Activated naive CD4-positive, alpha-beta T cell treated with anti-CD3 and anti-CD28 coated beads for 36 hours (primary cell): ENCODE measurements at regions of chr14 and their contacts with region 1.

Region 1: DNA sequence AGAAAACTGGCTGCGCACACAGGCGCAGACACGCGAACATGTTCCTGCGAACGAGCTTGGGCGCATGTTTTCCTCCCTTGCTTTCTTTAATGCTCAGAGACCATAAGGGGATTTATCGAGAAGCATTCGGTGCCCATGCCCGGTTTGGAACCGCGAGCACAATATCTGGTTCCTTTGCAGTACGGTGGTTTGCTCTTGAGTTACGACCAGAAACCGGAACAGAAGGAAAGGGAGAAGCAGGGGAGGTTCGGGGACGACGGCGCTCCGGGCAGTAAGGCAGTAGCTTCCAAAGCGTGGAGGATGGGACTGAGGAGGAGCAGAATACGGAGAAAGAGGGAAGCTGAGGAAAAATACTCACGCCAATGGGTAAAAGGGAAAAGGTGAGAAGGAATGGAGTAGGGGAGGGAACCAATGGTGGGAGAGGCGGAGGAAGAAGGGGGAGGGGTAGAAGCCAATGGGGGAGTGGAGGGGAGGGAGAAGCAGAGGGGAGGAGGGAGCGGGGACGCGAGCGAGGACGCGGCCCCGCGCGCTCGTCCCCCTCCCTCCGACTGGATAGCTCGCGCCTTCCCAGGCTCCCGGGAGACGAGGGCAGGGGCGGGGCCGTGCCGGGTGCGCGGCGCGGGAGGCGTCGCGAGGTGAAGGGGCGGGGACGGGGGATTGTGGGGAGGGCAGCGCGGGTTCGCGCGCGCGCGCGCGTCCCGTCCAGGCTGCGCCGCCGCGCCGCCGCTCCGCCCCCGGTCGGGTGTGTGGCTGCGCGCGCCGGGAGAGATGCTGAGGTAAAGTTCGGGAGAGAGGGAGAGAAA is 625 bp upstream of the ARHGAP5 start:
- DNase-seq: peak; percentile 81
- H3K4me3 Mint-ChIP-seq: peak overlapping the region; percentile 95
- H3K27ac Mint-ChIP-seq: peak overlapping the region; percentile 89
- H3K4me1 Mint-ChIP-seq: peaks cover 31% of the 10 kb centered on the region
- H3K27me3 Mint-ChIP-seq: peaks cover 2% of the 10 kb centered on the region

Region 2: DNA sequence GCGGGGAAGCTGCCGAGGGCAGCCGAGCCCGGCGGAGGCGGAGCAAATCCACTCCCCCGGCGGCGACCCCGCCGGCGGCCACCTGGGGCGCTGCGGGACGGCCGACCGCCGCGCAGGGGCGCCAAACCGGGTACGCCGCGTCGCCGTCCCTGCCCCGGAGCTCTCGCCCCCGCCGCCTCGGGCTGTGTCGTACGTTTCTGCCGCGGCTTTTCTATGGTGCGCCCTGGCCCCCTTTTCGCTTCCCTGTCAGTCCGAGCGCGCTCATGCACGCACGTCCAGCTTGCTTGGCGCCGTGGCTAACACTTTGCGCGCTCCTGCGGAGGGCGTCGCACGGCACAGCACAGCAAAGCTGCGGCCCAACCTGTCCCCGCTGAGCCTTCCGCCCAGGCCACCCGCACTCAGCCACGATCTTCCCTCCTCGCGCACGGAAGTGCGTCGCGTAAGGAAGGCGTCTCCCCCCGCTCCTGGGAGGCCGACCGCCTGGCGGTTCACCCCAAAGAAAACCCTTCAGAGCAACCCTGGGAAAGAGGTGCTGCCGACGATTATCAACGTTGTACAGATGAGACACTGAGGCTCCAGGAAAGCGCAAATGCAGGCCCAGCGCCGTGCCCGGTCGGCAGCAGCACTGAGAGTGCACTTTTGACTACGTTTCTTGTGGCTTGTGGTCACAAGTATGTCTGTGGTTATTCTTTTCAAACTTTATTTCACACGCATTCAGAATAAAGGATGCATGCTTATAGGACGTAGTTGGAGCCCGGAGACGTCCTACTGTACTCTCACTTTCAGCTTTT is 868.5 kb before region 1 on chr14 and contains the start of gene HECTD1:
- CTCF ChIA-PET with region 1: no interaction called
- intact Hi-C with region 1: loop called (anchors 2 kb)
- DNase-seq: peak; percentile 89
- H3K4me3 Mint-ChIP-seq: peak within 1 kb of the TSS; percentile 92
- H3K27ac Mint-ChIP-seq: peak within 1 kb of the TSS; percentile 100
- H3K4me1 Mint-ChIP-seq: peaks cover 34% of the 10 kb centered on the region
- H3K27me3 Mint-ChIP-seq: no peaks in the 10 kb centered on the region
- total RNA-seq, gene HECTD1: 61.5 to 64.1 TPM

Region 3: GRCh38 chr14:31510222-31510621 is 566.3 kb before region 1 on chr14:
- CTCF ChIA-PET with region 1: no interaction called
- intact Hi-C with region 1: loop called (anchors 2 kb)
- DNase-seq: no peak
- H3K4me3 Mint-ChIP-seq: no peak overlapping the region
- H3K27ac Mint-ChIP-seq: no peak overlapping the region
- H3K4me1 Mint-ChIP-seq: no peaks in the 10 kb centered on the region
- H3K27me3 Mint-ChIP-seq: no peaks in the 10 kb centered on the region

Region 4: DNA sequence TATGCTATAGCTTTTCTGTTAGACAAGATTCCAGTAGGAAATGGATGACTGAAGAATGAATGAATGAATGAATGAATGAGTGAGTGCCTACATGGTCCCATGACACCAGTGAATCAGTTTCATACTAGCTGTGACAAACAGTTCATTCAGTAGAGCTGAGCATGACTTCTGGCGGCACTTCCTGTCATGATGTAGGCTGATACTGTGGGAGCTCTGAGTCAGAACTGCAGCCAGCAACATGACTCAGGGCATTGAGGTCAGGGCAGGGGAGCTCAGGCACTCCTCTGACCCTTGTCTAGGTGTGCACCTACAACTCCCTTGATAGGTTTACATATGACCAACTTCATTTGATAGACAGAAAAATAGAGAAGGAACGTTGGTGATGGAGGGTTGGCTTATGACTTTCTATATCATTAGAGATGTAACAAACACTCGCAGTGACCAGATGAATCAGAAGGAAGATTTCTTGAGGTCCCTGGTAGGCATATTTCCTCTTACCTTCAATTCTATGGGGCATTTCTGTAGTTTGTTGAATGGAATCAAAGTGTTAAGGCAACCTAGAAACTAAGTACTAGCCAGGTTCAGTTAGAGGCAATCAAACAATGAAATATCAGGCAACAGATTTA is 138.6 kb before region 1 on chr14:
- CTCF ChIA-PET with region 1: interaction called, 5 read pairs
- intact Hi-C with region 1: loop called (anchors 1 kb)
- DNase-seq: peak; percentile 89
- H3K4me3 Mint-ChIP-seq: no peak overlapping the region
- H3K27ac Mint-ChIP-seq: peak overlapping the region; percentile 20
- H3K4me1 Mint-ChIP-seq: peaks cover 20% of the 10 kb centered on the region
- H3K27me3 Mint-ChIP-seq: no peaks in the 10 kb centered on the region

Region 5: GRCh38 chr14:32202998-32203882 is 126.8 kb after region 1 on chr14 and contains the start of gene RNU6-8:
- CTCF ChIA-PET with region 1: interaction called, 7 read pairs
- intact Hi-C with region 1: loop called (anchors 1 kb)
- DNase-seq: peak; percentile 86
- H3K4me3 Mint-ChIP-seq: peak within 1 kb of the TSS; percentile 89
- H3K27ac Mint-ChIP-seq: peak within 1 kb of the TSS; percentile 99
- H3K4me1 Mint-ChIP-seq: peaks cover 35% of the 10 kb centered on the region
- H3K27me3 Mint-ChIP-seq: no peaks in the 10 kb centered on the region
- total RNA-seq, gene RNU6-8: not detected

Region 6: GRCh38 chr14:32382704-32383103 is 306.2 kb after region 1 on chr14:
- CTCF ChIA-PET with region 1: no interaction called
- intact Hi-C with region 1: loop called (anchors 1 kb)
- DNase-seq: no peak
- H3K4me3 Mint-ChIP-seq: no peak overlapping the region
- H3K27ac Mint-ChIP-seq: no peak overlapping the region
- H3K4me1 Mint-ChIP-seq: peaks cover 19% of the 10 kb centered on the region
- H3K27me3 Mint-ChIP-seq: no peaks in the 10 kb centered on the region

Region 7: GRCh38 chr14:32560209-32560857 is 483.9 kb after region 1 on chr14:
- CTCF ChIA-PET with region 1: no interaction called
- intact Hi-C with region 1: loop called (anchors 1 kb)
- DNase-seq: peak; percentile 64
- H3K4me3 Mint-ChIP-seq: no peak overlapping the region
- H3K27ac Mint-ChIP-seq: no peak overlapping the region
- H3K4me1 Mint-ChIP-seq: peaks cover 12% of the 10 kb centered on the region
- H3K27me3 Mint-ChIP-seq: no peaks in the 10 kb centered on the region